Endothelial cell of umbilical vein (primary cell): ENCODE measurements at regions of chr10 and their contacts with region 1.

Region 1: DNA sequence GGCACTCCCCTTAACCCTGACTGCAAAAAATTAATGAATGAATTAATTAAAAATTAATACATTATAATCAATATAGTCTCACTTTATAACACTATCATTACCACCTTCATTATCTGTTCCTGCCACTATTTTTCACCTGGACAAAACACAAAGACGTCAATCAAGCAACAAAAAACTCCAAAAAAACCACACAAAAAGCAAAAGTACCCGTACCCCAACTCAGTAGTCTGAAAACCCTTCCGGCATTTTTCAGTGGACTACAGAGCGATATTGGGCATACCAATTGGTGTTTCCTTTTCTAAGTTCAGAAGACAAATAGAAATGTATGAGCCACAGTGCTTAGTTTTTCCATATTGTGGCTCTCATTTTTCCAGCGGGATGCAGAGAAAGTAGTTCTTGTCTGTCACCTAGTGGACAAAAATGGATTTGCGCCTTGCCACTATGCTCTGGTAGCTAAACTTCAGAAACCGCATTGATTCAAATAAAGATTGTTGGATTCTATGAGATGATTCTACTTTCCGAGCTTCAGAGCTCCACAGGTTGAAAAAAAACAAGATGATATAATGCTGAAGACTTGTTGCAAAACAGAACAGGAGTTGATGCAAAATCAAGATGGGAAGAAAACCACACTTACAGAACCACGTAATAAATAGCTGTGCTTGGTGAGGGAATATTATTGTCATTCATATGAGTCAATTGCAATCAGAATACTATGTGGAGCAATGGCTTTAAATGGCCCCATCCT is 50.6 kb upstream of the ITGB1 start:
- DNase-seq: peak; percentile 82
- H3K4me3 ChIP-seq: no peak overlapping the region
- H3K27ac ChIP-seq: peak overlapping the region; percentile 43
- H3K4me1 ChIP-seq: peaks cover 15% of the 10 kb centered on the region
- H3K27me3 ChIP-seq: no peaks in the 10 kb centered on the region
- CTCF ChIP-seq: peak; percentile 90 to 92
- POLR2A ChIP-seq: no peak

Region 2: GRCh38 chr10:32445740-32446535 is 562.7 kb before region 1 on chr10 and contains the start of gene CCDC7:
- CTCF ChIA-PET with region 1: interaction called, 13 read pairs
- POLR2A ChIA-PET with region 1: interaction called, 4 read pairs
- dilution Hi-C with region 1: no loop called
- intact Hi-C with region 1: loop called (anchors 2 kb)
- DNase-seq: peak; percentile 93
- H3K4me3 ChIP-seq: peak within 1 kb of the TSS; percentile 47 to 91 (median 82)
- H3K27ac ChIP-seq: peak within 1 kb of the TSS; percentile 100
- H3K4me1 ChIP-seq: peaks cover 8% of the 10 kb centered on the region
- H3K27me3 ChIP-seq: peaks cover 2 to 16% of the 10 kb centered on the region in 2 experiments
- CTCF ChIP-seq: peak; percentile 53 to 63
- POLR2A ChIP-seq: peak; percentile 93
- total RNA-seq, gene CCDC7: 6.6 and 8.2 TPM in 2 replicates

Region 3: GRCh38 chr10:32459051-32459698 is 549.5 kb before region 1 on chr10:
- CTCF ChIA-PET with region 1: no interaction called
- POLR2A ChIA-PET with region 1: no interaction called
- dilution Hi-C with region 1: no loop called
- intact Hi-C with region 1: no loop called
- DNase-seq: no peak
- H3K4me3 ChIP-seq: no peak overlapping the region
- H3K27ac ChIP-seq: no peak overlapping the region
- H3K4me1 ChIP-seq: no peaks in the 10 kb centered on the region
- H3K27me3 ChIP-seq: no peaks in the 10 kb centered on the region
- CTCF ChIP-seq: no peak
- POLR2A ChIP-seq: no peak

Region 4: DNA sequence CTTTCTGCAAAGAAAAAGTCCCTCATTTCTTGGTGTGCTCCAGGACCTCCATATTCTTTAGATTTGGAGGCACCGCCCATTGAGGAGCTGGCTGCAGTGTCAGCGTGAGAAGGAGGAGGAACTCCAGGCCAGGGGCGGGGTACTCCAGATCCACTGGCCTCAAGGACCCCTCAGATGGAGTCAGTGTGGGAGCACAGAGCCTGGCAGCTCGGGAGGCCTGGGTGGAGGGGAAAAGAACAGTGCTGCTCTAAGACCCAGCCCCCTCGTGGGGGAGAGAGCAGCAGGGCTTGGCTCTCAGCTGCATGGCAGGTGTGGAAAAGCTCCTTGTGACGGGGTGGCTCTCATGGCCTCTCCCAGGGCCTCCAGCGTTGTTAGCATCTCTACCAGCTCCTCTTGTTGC is 121.2 kb before region 1 on chr10:
- CTCF ChIA-PET with region 1: interaction called, 11 read pairs
- POLR2A ChIA-PET with region 1: interaction called, 3 read pairs
- dilution Hi-C with region 1: no loop called
- intact Hi-C with region 1: loop called (anchors 5 kb)
- DNase-seq: no peak
- H3K4me3 ChIP-seq: no peak overlapping the region
- H3K27ac ChIP-seq: no peak overlapping the region
- H3K4me1 ChIP-seq: no peaks in the 10 kb centered on the region
- H3K27me3 ChIP-seq: no peaks in the 10 kb centered on the region
- CTCF ChIP-seq: no peak
- POLR2A ChIP-seq: no peak

Region 5: GRCh38 chr10:32929632-32930031 is 79.0 kb before region 1 on chr10:
- CTCF ChIA-PET with region 1: interaction called, 15 read pairs
- POLR2A ChIA-PET with region 1: no interaction called
- dilution Hi-C with region 1: no loop called
- intact Hi-C with region 1: no loop called
- DNase-seq: no peak
- H3K4me3 ChIP-seq: no peak overlapping the region
- H3K27ac ChIP-seq: no peak overlapping the region
- H3K4me1 ChIP-seq: no peaks in the 10 kb centered on the region
- H3K27me3 ChIP-seq: no peaks in the 10 kb centered on the region
- CTCF ChIP-seq: no peak
- POLR2A ChIP-seq: no peak

Region 6: GRCh38 chr10:32958085-32959005 is 50.3 kb before region 1 on chr10 and contains the start of gene ITGB1:
- CTCF ChIA-PET with region 1: interaction called, 32 read pairs
- POLR2A ChIA-PET with region 1: no interaction called
- dilution Hi-C with region 1: no loop called
- intact Hi-C with region 1: loop called (anchors 1 kb)
- DNase-seq: peak; percentile 96
- H3K4me3 ChIP-seq: peak within 1 kb of the TSS; percentile 99 to 100 (median 99)
- H3K27ac ChIP-seq: peak within 1 kb of the TSS; percentile 97
- H3K4me1 ChIP-seq: peaks cover 68% of the 10 kb centered on the region
- H3K27me3 ChIP-seq: no peaks in the 10 kb centered on the region
- CTCF ChIP-seq: no peak
- POLR2A ChIP-seq: peak; percentile 80
- total RNA-seq, gene ITGB1: 1,125 and 1,147 TPM in 2 replicates

Region 7: DNA sequence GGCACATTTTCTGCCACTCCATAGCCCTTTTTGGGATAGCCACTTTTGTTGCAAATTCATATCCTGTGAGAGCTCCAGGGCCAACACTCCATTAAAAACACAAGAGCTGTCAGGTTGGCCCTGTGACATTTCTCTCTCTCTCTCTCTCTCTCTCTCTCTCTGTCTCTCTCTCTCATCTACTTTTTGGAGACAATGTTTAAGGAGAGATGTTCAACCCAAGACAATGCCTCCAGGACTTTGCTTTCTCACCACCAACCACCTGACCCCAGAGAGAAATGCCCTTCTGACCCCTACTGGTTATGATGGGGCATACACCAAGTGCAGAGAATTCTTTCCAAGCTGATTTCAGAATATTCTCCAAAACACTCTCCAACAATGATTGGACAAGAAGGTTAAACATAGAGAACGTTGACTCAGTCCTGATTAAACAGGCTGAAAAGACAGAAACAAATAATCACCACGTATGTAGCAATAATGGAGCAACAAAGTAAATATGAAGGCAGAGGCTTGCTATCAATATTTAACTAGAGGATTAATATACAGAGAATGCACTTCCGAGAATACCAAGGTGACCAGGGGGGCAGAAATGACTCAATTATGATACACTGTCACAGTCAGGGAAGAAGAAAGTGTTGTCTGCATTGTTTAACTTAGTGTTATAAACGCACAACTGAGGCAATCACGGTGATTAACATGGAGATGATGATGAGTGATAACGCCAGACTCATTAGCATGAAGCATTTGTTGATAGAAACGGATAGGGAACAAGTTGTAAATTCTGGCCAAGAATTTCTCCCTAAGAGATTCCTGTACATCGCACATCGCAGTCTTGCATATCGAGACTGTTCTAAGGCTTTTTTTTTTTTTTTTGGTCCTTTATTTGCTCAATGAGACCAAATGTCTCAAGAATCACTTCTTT is 147.3 kb after region 1 on chr10:
- CTCF ChIA-PET with region 1: interaction called, 16 read pairs
- POLR2A ChIA-PET with region 1: no interaction called
- dilution Hi-C with region 1: no loop called
- intact Hi-C with region 1: loop called (anchors 1 kb)
- DNase-seq: no peak
- H3K4me3 ChIP-seq: no peak overlapping the region
- H3K27ac ChIP-seq: no peak overlapping the region
- H3K4me1 ChIP-seq: peaks cover 10% of the 10 kb centered on the region
- H3K27me3 ChIP-seq: peaks cover 0 to 4% of the 10 kb centered on the region in 2 experiments
- CTCF ChIP-seq: peak; percentile 39 to 50
- POLR2A ChIP-seq: no peak